ENCODE measurements at regions of chr1 and their contacts with region 1.

Region 1: DNA sequence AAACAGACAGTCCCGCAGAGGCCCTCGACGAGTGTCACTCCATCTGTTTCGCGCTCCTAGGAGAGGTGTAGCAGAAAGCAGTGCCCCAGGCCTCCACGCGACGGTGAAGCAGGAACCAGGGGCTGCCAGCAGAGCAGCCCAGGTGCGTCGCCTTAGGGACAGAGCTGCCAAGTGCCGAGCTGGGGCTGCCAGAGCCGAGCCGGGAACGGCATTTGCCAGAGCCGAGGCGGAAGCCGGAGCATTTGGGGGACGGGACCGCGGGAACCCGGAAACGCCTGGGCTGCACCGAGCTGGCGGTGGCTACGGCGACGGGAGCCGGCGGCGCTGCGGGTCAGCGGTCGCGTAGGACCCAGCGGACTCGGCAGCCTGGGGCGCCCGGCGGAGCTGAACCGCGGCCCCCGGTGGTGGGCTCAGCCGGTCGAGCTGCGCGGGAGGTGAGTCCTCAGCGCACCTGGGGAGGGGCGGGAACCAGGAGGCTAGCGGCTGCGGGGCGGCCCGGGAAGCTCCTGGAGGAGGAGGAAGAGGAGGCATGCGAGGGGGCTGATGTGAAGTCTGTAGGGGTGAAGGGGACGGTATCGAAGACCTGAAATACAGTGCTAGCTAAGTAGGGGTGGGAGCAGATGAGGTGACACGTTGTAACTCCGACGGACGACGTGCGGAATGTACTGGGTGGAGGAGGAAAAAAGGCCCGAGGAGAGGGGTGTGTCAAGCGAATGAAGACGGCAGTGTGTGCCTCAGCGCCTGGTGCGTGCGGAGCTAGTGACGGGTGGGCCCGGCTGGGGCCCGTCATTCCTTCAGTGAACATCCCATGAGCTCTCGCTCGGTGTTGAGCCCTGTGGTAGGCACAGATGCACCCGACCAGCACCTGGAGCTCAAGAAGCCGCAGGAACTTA is at the start of gene SLC35A3:
- DNase-seq: peak; percentile 74
- ATAC-seq: peak; percentile 97
- H3K4me3 ChIP-seq: peak within 1 kb of the TSS; percentile 79 to 97 (median 95)
- H3K27ac ChIP-seq: peak within 1 kb of the TSS; percentile 86
- H3K4me1 ChIP-seq: peaks cover 28% of the 10 kb centered on the region; the same call in 1 of the 2 replicates
- H3K27me3 ChIP-seq: no peaks in the 10 kb centered on the region; a peak in 1 of 5 replicates
- CTCF ChIP-seq: peak; percentile 50
- EP300 ChIP-seq: peak in 1 of 2 experiments; percentile 29; a peak in 1 of 4 replicates
- POLR2A ChIP-seq: peak; percentile 72 to 75; a peak in 3 of 4 replicates
- RAD21 ChIP-seq: peak; percentile 63
- total RNA-seq, gene SLC35A3: 19.2 and 24.9 TPM in 2 replicates

Region 2: GRCh38 chr1:99849744-99850458 is 120.1 kb before region 1 on chr1 and contains the start of gene AGL:
- CTCF ChIA-PET with region 1: no interaction called
- POLR2A ChIA-PET with region 1: interaction called, 10 read pairs
- in situ Hi-C with region 1: no loop called
- intact Hi-C with region 1: no loop called
- DNase-seq: peak; percentile 78
- ATAC-seq: peak; percentile 99
- H3K4me3 ChIP-seq: peak within 1 kb of the TSS; percentile 79 to 99 (median 88)
- H3K27ac ChIP-seq: peak within 1 kb of the TSS; percentile 73
- H3K4me1 ChIP-seq: peaks cover 29% of the 10 kb centered on the region
- H3K27me3 ChIP-seq: no peaks in the 10 kb centered on the region; a peak in 1 of 5 replicates
- CTCF ChIP-seq: no peak
- EP300 ChIP-seq: no peak; a peak in 1 of 4 replicates
- POLR2A ChIP-seq: peak; percentile 93 to 95
- RAD21 ChIP-seq: peak; percentile 50; the same call in 1 of the 2 replicates
- total RNA-seq, gene AGL: 13.1 and 28.0 TPM in 2 replicates

Region 3: GRCh38 chr1:99950486-99950885 is 19.5 kb before region 1 on chr1:
- CTCF ChIA-PET with region 1: no interaction called
- POLR2A ChIA-PET with region 1: no interaction called
- in situ Hi-C with region 1: no loop called
- intact Hi-C with region 1: no loop called
- DNase-seq: no peak
- ATAC-seq: no peak
- H3K4me3 ChIP-seq: no peak overlapping the region
- H3K27ac ChIP-seq: no peak overlapping the region
- H3K4me1 ChIP-seq: no peaks in the 10 kb centered on the region
- H3K27me3 ChIP-seq: no peaks in the 10 kb centered on the region
- CTCF ChIP-seq: no peak
- EP300 ChIP-seq: no peak
- POLR2A ChIP-seq: no peak
- RAD21 ChIP-seq: no peak

Measured in HepG2 (cell line).